Activated CD4-positive, alpha-beta T cell treated with anti-CD3 and anti-CD28 coated beads, Interleukin-2, amount 10 ng/mL, durations not matched to agents 24 days and 14 days (primary cell): ENCODE measurements at regions of chr5 and their contacts with region 1.

Region 1: DNA sequence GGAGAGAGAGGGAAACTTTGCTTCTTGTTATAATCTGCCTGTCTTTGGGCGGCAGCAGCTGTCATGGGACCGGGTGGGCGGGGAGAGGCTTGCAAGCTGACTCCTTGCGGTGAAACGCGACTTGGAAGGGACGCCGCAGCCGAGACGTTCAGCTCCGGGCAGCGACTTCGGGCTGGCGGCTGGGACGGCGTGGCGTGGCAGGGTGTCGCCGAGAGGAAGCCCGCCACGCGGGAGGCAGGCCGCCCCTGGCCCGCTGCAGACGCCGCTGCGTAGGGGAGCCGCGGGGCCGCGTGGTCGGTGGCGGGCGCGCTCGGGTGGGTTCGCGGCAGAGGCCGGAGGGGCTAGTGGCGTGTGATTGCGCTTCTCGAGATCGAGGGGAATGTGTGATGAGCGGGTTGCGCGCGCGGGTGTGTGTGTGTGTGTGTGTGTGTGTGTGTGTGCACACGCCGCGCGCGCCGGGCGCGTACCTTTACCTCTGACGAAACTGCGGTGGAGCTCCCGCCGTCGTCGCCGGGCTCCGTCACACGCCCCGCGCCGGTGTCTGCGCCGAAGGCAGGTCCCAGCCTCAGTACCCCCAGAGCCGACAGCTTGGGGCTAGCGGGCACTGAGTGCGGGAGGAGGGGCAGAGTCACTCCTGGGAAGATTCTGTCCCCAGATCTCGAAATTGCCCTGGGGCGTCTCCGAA is 1.7 kb downstream of the PPARGC1B start:
- DNase-seq: peak; percentile 87
- H3K4me3 Mint-ChIP-seq: peak overlapping the region; percentile 87
- H3K27ac Mint-ChIP-seq: peak overlapping the region; percentile 87
- H3K4me1 Mint-ChIP-seq: peaks cover 7% of the 10 kb centered on the region
- H3K27me3 Mint-ChIP-seq: peaks cover 10% of the 10 kb centered on the region

Region 2: GRCh38 chr5:149345147-149345875 is 386.5 kb before region 1 on chr5 and contains the start of gene GRPEL2:
- intact Hi-C with region 1: loop called (anchors 2 kb)
- DNase-seq: peak; percentile 97
- H3K4me3 Mint-ChIP-seq: peak within 1 kb of the TSS; percentile 96
- H3K27ac Mint-ChIP-seq: peak within 1 kb of the TSS; percentile 97
- H3K4me1 Mint-ChIP-seq: peaks cover 46% of the 10 kb centered on the region
- H3K27me3 Mint-ChIP-seq: peaks cover 1% of the 10 kb centered on the region
- total RNA-seq, gene GRPEL2: 30.6 and 30.7 TPM in 2 replicates

Region 3: GRCh38 chr5:149651686-149652085 is 80.1 kb before region 1 on chr5:
- intact Hi-C with region 1: loop called (anchors 5 kb)
- DNase-seq: peak; percentile 68
- H3K4me3 Mint-ChIP-seq: no peak overlapping the region
- H3K27ac Mint-ChIP-seq: no peak overlapping the region
- H3K4me1 Mint-ChIP-seq: no peaks in the 10 kb centered on the region
- H3K27me3 Mint-ChIP-seq: no peaks in the 10 kb centered on the region

Region 4: GRCh38 chr5:149828161-149828884 is 96.5 kb after region 1 on chr5:
- intact Hi-C with region 1: loop called (anchors 2 kb)
- DNase-seq: peak; percentile 94
- H3K4me3 Mint-ChIP-seq: no peak overlapping the region
- H3K27ac Mint-ChIP-seq: peak overlapping the region; percentile 16
- H3K4me1 Mint-ChIP-seq: peaks cover 12% of the 10 kb centered on the region
- H3K27me3 Mint-ChIP-seq: no peaks in the 10 kb centered on the region

Region 5: DNA sequence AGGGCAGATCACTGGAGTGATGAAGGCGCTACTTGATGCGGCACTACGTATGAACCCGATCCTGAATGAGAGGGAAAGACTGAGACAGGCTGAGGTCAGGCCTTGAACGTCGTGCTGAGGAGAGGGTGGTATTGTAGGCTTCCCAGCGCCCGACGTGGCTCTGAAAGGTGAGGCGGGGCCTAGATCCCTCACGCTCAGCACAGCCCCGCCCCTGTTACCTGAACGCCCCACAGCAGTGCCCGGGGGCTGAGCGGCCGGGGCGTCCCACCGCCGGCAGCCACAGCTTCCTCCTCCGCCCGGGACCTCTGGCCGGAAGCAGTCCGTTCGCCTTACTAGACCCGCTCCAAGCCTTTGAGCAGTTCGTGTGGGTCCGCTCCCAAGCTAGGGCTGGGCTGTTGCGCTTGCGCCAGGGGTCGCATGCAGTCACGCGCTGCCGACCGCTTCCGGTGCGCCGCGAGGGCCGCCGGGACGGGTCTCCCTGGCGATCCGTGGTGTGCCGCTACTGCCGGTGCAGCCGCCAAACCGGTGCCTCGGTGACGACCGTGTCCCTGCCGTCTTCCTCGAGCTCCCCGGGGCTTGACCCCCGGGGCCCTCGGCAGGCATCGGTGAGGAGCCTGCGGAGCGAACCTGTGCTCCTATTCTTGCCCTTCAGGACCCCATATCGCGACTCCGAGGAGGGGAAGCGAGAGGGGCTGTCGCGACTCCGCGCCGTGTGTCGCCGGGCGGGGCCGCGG is 268.6 kb after region 1 on chr5 and contains the starts of genes HMGXB3 and TIGD6:
- intact Hi-C with region 1: loop called (anchors 2 kb)
- DNase-seq: peak; percentile 96
- H3K4me3 Mint-ChIP-seq: peak within 1 kb of the TSS; percentile 86
- H3K27ac Mint-ChIP-seq: peak within 1 kb of the TSS; percentile 97
- H3K4me1 Mint-ChIP-seq: peaks cover 41% of the 10 kb centered on the region
- H3K27me3 Mint-ChIP-seq: no peaks in the 10 kb centered on the region
- total RNA-seq, gene HMGXB3: 43.1 and 47.8 TPM in 2 replicates
- total RNA-seq, gene TIGD6: 2.5 TPM in 2 replicates